K562 (cell line): ENCODE measurements at regions of chr4 and their contacts with region 1.

Region 1: DNA sequence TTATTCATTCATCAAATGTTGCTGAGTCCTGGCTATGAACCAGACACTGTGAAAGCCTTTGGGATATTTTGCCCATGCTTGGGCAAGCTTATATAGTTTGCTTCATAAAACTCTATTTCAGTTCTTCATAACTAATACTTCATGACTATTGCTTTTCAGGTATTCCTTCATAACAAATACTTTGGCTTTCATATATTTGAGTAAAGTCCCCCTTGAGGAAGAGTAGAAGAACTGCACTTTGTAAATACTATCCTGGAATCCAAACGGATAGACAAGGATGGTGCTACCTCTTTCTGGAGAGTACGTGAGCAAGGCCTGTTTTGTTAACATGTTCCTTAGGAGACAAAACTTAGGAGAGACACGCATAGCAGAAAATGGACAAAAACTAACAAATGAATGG is 1.7 kb upstream of the AFP start:
- DNase-seq: peak in 3 of 4 experiments; percentile 9 to 22 (median 13)
- ATAC-seq: peak; percentile 67; the same call in 2 of the 3 replicates
- H3K4me3 ChIP-seq: no peak overlapping the region
- H3K27ac ChIP-seq: no peak overlapping the region
- H3K4me1 ChIP-seq: peaks cover 0 to 13% of the 10 kb centered on the region in 2 experiments; a peak in 2 of 5 replicates
- H3K27me3 ChIP-seq: no peaks in the 10 kb centered on the region
- CTCF ChIP-seq: peak in 2 of 3 experiments; percentile 39 to 44; a peak in 3 of 6 replicates
- EP300 ChIP-seq: no peak
- POLR2A ChIP-seq: no peak
- RAD21 ChIP-seq: peak in 1 of 2 experiments; percentile 39; a peak in 2 of 4 replicates

Region 2: GRCh38 chr4:73341454-73341853 is 92.9 kb before region 1 on chr4:
- CTCF ChIA-PET with region 1: no interaction called
- POLR2A ChIA-PET with region 1: no interaction called
- in situ Hi-C with region 1: no loop called
- intact Hi-C with region 1: loop called (anchors 5 kb)
- DNase-seq: peak; percentile 12 to 67 (median 20)
- ATAC-seq: peak; percentile 93
- H3K4me3 ChIP-seq: no peak overlapping the region
- H3K27ac ChIP-seq: no peak overlapping the region
- H3K4me1 ChIP-seq: peaks cover 0 to 2% of the 10 kb centered on the region in 2 experiments; a peak in 1 of 5 replicates
- H3K27me3 ChIP-seq: no peaks in the 10 kb centered on the region
- CTCF ChIP-seq: peak; percentile 65 to 84 (median 83)
- EP300 ChIP-seq: no peak
- POLR2A ChIP-seq: no peak
- RAD21 ChIP-seq: peak; percentile 88 to 91

Region 3: GRCh38 chr4:73481358-73481757 is 47.0 kb after region 1 on chr4 and contains the start of gene AFM:
- CTCF ChIA-PET with region 1: no interaction called
- POLR2A ChIA-PET with region 1: no interaction called
- in situ Hi-C with region 1: no loop called
- intact Hi-C with region 1: no loop called
- DNase-seq: no peak
- ATAC-seq: no peak
- H3K4me3 ChIP-seq: no peak within 1 kb of the TSS
- H3K27ac ChIP-seq: no peak within 1 kb of the TSS
- H3K4me1 ChIP-seq: 0 out of 5 replicates have a peak, but pooled peaks cover 0 to 3% of the 10 kb centered on the region in 2 experiments
- H3K27me3 ChIP-seq: no peaks in the 10 kb centered on the region
- CTCF ChIP-seq: no peak
- EP300 ChIP-seq: no peak
- POLR2A ChIP-seq: no peak
- RAD21 ChIP-seq: no peak
- polyA plus RNA-seq, gene AFM: 0.10 to 0.15 TPM

Region 4: DNA sequence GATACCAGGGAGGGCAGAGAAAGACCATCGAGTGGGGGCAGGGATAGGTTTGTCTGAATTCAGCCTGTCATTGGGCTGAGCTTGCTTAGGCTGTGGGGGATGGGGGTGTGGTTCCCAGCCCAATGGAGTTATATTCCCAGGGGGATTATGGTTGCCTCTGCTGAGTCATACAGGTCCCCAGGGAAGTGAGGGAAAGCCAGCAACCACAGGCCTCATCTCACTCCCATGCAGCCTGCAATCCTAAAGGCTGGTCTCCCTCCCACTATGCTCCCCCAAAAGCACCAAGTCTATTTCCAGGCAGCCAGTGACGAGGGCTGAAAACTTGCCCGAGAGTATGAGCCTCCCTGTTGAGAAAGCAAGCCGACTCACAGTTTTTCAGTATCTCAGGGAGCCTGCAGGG is 86.5 kb after region 1 on chr4:
- CTCF ChIA-PET with region 1: no interaction called
- POLR2A ChIA-PET with region 1: no interaction called
- in situ Hi-C with region 1: no loop called
- intact Hi-C with region 1: no loop called
- DNase-seq: no peak
- ATAC-seq: no peak
- H3K4me3 ChIP-seq: no peak overlapping the region
- H3K27ac ChIP-seq: no peak overlapping the region
- H3K4me1 ChIP-seq: no peaks in the 10 kb centered on the region
- H3K27me3 ChIP-seq: no peaks in the 10 kb centered on the region
- CTCF ChIP-seq: no peak
- EP300 ChIP-seq: no peak
- POLR2A ChIP-seq: no peak
- RAD21 ChIP-seq: no peak